ENCODE measurements at regions of chr15 and their contacts with region 1.

Region 1: GRCh38 chr15:59725172-59725486 is 36.0 kb upstream of the BNIP2 start:
- DNase-seq: no peak
- ATAC-seq: no peak
- H3K4me3 ChIP-seq: no peak overlapping the region
- H3K27ac ChIP-seq: no peak overlapping the region
- H3K4me1 ChIP-seq: peaks cover 8% of the 10 kb centered on the region; the same call in 2 of the 3 replicates
- CTCF ChIP-seq: no peak
- EP300 ChIP-seq: no peak
- POLR2A ChIP-seq: no peak
- RAD21 ChIP-seq: no peak

Region 2: GRCh38 chr15:59699810-59700431 is 25.2 kb before region 1 on chr15:
- CTCF ChIA-PET with region 1: interaction called, 45 read pairs
- POLR2A ChIA-PET with region 1: no interaction called
- DNase-seq: peak; percentile 39 to 42
- ATAC-seq: peak in 1 of 2 experiments; percentile 21; a peak in 1 of 6 replicates
- H3K4me3 ChIP-seq: no peak overlapping the region
- H3K27ac ChIP-seq: peak overlapping the region; percentile 8; a peak in 2 of 6 replicates
- H3K4me1 ChIP-seq: peaks cover 69% of the 10 kb centered on the region
- CTCF ChIP-seq: no peak
- EP300 ChIP-seq: no peak
- POLR2A ChIP-seq: no peak
- RAD21 ChIP-seq: no peak

Region 3: GRCh38 chr15:59736184-59736583 is 11.1 kb after region 1 on chr15:
- CTCF ChIA-PET with region 1: interaction called, 52 read pairs
- POLR2A ChIA-PET with region 1: no interaction called
- DNase-seq: peak in 1 of 2 experiments; percentile 20
- ATAC-seq: peak; percentile 58 to 72; a peak in 4 of 6 replicates
- H3K4me3 ChIP-seq: no peak overlapping the region
- H3K27ac ChIP-seq: no peak overlapping the region
- H3K4me1 ChIP-seq: no peaks in the 10 kb centered on the region
- CTCF ChIP-seq: no peak
- EP300 ChIP-seq: no peak
- POLR2A ChIP-seq: no peak
- RAD21 ChIP-seq: no peak

Region 4: GRCh38 chr15:59751552-59752413 is 26.7 kb after region 1 on chr15:
- CTCF ChIA-PET with region 1: interaction called, 13 read pairs
- POLR2A ChIA-PET with region 1: no interaction called
- DNase-seq: peak; percentile 33 to 52
- ATAC-seq: peak; percentile 84 to 88; a peak in 5 of 6 replicates
- H3K4me3 ChIP-seq: no peak overlapping the region
- H3K27ac ChIP-seq: no peak overlapping the region
- H3K4me1 ChIP-seq: no peaks in the 10 kb centered on the region
- CTCF ChIP-seq: peak; percentile 34; the same call in 2 of the 3 replicates
- EP300 ChIP-seq: no peak
- POLR2A ChIP-seq: no peak
- RAD21 ChIP-seq: peak; percentile 40 to 58; a peak in 4 of 5 replicates

Region 5: GRCh38 chr15:59779110-59779509 is 54.0 kb after region 1 on chr15:
- CTCF ChIA-PET with region 1: no interaction called
- POLR2A ChIA-PET with region 1: no interaction called
- DNase-seq: no peak
- ATAC-seq: no peak; a peak in 1 of 6 replicates
- H3K4me3 ChIP-seq: no peak overlapping the region
- H3K27ac ChIP-seq: no peak overlapping the region
- H3K4me1 ChIP-seq: no peaks in the 10 kb centered on the region
- CTCF ChIP-seq: no peak
- EP300 ChIP-seq: no peak
- POLR2A ChIP-seq: no peak
- RAD21 ChIP-seq: no peak

Region 6: DNA sequence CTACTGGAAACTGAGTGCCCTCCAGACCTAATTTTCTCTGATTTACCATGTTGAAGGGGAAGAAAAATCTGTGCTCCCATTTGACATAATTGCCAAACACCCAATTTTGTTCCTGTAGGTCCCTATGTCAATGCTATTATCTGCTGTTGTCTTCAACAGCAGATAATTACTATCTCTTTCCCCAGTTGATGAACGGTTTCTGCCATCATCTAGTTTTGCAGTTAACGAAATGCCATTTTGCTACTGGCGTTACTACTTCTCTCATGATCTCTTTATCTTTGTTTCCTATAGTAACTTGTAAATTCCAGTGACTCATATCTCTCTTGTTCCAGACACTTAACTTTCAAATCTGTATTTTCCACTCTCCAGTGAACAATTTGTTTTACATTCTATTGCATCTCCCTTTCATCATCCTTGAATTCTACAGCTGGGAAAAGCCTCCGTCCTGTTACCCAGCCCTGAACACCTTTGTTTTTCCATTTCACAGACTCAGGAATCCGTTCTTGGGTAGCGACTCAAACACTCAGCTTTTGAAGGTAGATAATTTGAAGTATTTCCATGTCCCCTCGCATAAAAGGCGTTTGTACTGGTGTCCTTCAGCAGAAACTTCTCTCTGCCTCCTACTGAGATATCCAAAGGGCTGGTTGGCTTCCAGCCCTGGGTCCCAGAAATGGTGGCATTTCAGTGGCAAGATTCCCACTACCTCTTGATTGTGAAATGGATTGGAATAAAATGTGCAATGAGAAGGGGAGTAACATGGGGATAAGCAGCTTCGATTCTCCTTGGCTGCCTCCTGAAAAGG is 390.7 kb after region 1 on chr15:
- CTCF ChIA-PET with region 1: interaction called, 10 read pairs
- POLR2A ChIA-PET with region 1: no interaction called
- DNase-seq: no peak
- ATAC-seq: no peak
- H3K4me3 ChIP-seq: no peak overlapping the region
- H3K27ac ChIP-seq: peak overlapping the region in 1 of 2 experiments; percentile 15; a peak in 1 of 6 replicates
- H3K4me1 ChIP-seq: no peaks in the 10 kb centered on the region
- CTCF ChIP-seq: no peak
- EP300 ChIP-seq: no peak
- POLR2A ChIP-seq: no peak
- RAD21 ChIP-seq: no peak

Region 7: GRCh38 chr15:60179786-60180391 is 454.8 kb after region 1 on chr15:
- CTCF ChIA-PET with region 1: interaction called, 10 read pairs
- POLR2A ChIA-PET with region 1: no interaction called
- DNase-seq: peak; percentile 50 to 60
- ATAC-seq: peak; percentile 72 to 91; a peak in 4 of 6 replicates
- H3K4me3 ChIP-seq: no peak overlapping the region
- H3K27ac ChIP-seq: no peak overlapping the region
- H3K4me1 ChIP-seq: no peaks in the 10 kb centered on the region
- CTCF ChIP-seq: peak; percentile 85
- EP300 ChIP-seq: no peak
- POLR2A ChIP-seq: no peak
- RAD21 ChIP-seq: peak; percentile 67 to 69

Region 8: DNA sequence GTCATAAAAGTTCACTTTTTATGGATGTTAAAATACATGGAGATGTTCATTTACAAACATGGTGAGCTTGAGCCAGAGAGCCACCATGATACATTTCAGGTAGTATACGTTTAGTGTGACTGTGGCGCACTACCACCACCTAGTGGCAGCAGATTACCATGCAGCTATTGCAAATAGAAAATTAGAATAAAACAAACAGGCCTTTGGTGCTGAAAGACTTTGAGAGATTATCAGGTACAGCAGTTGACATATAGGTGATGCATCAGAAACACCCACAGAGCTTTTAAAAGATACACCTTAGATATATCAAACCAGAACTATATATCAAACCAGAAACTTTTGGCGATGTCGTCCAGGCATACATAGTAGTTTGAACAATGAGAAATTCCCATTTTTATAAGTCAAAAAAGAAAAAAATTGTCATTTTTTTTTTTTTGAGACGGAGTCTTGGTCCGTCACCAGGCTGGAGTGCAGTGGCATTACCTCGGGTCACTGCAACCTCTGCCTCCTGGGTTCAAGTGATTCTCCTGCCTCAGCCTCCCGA is 795.8 kb after region 1 on chr15:
- CTCF ChIA-PET with region 1: interaction called, 15 read pairs
- POLR2A ChIA-PET with region 1: no interaction called
- DNase-seq: peak; percentile 68 to 84
- ATAC-seq: peak; percentile 91 to 93
- H3K4me3 ChIP-seq: no peak overlapping the region
- H3K27ac ChIP-seq: no peak overlapping the region
- H3K4me1 ChIP-seq: peaks cover 13% of the 10 kb centered on the region
- CTCF ChIP-seq: peak; percentile 98
- EP300 ChIP-seq: no peak
- POLR2A ChIP-seq: no peak
- RAD21 ChIP-seq: peak; percentile 94 to 98